Breast epithelium (tissue), 4 donors: ENCODE measurements at regions of chr9 and their contacts with region 1.

Region 1: DNA sequence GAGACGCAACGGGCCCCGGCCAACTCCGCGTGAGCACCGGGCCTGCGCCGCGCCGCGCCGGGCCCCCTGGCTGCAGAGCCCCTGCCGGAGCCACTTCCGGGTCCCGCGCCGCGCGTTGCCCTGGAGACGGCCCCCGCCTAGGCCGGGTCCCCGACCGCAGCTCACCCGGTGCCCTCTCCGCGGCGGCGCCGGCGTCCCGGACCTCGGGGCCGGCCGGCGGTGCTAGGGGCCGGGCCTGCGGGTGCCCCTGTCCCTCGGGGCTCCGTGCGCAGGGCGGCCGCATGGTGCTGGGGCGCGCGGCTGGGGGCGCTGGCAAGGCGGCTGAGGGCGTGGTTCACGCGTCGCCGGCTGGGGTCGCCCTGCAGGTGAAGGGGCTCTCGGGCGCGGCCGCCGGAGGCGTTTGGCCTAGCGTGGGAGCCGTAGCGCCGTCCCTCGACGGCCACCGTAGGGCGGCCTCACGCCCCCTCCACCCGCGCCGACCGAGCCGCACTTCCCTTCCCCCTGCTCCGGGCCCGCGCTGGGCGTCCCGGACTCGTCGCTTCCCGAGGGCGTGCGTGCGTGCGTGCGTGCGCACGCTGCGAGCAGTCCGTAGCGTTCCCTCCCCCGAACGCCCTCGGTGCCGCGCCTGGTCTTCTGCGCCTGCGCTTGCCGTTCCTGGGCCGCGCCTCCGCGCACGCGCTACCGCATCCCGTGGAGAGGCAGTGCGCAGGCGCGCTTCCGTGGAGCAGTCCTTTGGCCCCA is at the start of gene TMEM250:
- DNase-seq: peak; percentile 89 to 94
- H3K4me3 ChIP-seq: peak within 1 kb of the TSS; percentile 59 to 86 (median 76)
- H3K27ac ChIP-seq: peak within 1 kb of the TSS; percentile 88 to 97
- H3K4me1 ChIP-seq: peaks cover 9 to 13% of the 10 kb centered on the region in 2 donors
- H3K27me3 ChIP-seq: peaks cover 0 to 4% of the 10 kb centered on the region in 2 donors
- CTCF ChIP-seq: peak in 1 of 3 donors; percentile 6
- POLR2A ChIP-seq: peak; percentile 59
- total RNA-seq, gene TMEM250: 24.9 to 29.5 (median 26.1) TPM

Region 2: GRCh38 chr9:135971892-135972291 is 146.6 kb before region 1 on chr9:
- intact Hi-C with region 1: loop called (anchors 5 kb)
- DNase-seq: peak; percentile 56 to 79
- H3K4me3 ChIP-seq: no peak overlapping the region
- H3K27ac ChIP-seq: no peak overlapping the region
- H3K4me1 ChIP-seq: no peaks in the 10 kb centered on the region
- H3K27me3 ChIP-seq: peaks cover 0 to 23% of the 10 kb centered on the region in 2 donors
- CTCF ChIP-seq: no peak
- POLR2A ChIP-seq: no peak

Region 3: DNA sequence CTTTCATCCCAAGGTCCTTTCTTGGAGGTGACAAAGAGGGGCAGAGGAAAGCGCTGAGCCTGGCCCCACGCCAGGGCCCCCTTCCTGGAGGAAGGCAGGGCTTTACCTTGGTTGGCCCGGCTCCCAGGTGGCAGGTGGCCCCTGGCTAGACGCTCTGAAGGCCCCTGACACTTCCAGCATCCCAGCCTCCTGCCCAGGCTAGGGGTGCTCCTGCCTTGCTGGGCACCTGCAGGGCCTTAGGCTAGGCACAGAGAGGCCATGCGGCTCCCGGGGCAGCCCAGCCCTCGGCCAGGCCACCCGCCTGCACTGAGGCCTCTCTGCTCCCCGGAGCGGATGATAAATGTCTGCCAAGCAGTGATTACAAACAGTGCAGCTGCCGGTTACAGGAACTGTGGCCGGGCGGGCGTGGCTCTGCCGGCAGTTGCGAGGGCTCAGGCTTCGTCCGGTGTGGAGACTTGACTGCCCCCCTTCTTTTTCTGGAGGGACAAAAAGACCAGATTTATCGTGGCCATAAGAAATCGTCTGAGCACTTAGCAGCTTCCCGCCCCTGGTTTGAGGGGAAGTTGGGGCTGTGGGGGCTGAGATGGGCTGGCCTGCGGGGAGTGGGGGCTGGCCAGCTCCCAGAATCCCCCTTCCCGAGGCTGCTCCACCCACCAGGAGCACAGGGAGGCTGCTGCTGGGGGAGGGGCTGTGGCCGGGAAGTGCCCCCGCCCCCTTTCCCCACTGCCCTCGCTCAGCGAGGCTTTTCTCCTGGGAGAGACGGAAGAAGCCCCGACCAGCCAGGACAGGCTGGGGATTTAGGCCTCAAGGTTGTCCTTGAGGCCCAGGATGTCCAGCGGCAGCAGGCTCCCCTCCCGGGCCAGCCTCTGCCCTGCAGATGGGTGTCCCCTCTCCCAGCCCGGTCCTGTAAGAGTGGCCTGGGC is 125.7 kb before region 1 on chr9:
- intact Hi-C with region 1: loop called (anchors 10 kb)
- DNase-seq: peak; percentile 34 to 73
- H3K4me3 ChIP-seq: peak overlapping the region; percentile 7 to 63 (median 39)
- H3K27ac ChIP-seq: peak overlapping the region; percentile 78 to 93
- H3K4me1 ChIP-seq: peaks cover 6 to 22% of the 10 kb centered on the region in 2 donors
- H3K27me3 ChIP-seq: peaks cover 0 to 16% of the 10 kb centered on the region in 2 donors
- CTCF ChIP-seq: no peak
- POLR2A ChIP-seq: no peak

Region 4: DNA sequence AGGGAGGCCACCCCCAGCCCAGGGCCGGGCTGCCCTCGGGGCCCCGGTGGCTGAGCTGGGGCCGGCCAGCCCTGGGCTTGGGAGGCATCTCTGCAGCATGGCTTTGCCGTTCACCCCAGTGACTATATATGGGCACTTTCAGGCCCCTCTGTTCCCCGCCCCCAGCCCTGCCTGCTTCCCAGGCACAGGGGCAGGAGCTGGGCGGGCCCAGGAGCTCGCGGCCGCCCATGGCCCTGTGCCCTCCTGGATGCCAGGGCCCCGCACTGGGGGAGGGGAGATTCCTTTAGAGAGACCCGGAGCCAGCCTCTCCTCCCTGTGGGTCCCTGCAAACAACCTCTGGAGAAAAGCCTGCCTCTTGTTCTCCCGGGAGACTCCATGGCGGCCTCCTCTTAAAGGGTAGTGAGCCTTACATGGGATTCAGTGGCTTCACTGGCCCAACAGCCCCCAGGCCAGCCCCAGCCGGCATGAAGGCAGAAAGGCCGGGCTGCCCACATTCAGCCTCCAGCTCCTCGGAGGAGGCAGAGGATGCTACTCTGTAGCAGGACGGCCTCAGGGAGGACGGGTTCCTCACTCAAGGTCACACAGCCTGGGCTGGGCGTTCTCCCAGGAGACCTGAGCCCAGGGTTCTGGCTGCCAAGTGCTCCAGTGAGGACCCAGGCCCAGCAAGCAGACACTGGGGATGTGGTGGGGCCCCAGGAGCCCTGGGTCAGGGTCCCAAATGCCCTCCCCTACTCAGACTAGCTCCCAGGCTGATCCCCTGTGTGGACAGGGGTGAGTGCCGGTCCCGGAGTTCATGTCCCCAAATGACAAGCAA is 27.5 kb before region 1 on chr9:
- intact Hi-C with region 1: loop called (anchors 1 kb)
- DNase-seq: peak in 1 of 2 donors; percentile 48
- H3K4me3 ChIP-seq: peak overlapping the region in 1 of 3 donors; percentile 23
- H3K27ac ChIP-seq: peak overlapping the region; percentile 61 to 85
- H3K4me1 ChIP-seq: peaks cover 4 to 33% of the 10 kb centered on the region in 2 donors
- H3K27me3 ChIP-seq: no peaks in the 10 kb centered on the region
- CTCF ChIP-seq: no peak
- POLR2A ChIP-seq: no peak

Region 5: GRCh38 chr9:137705443-137706293 is 1587.2 kb after region 1 on chr9:
- intact Hi-C with region 1: no loop called
- DNase-seq: no peak
- H3K4me3 ChIP-seq: no peak overlapping the region
- H3K27ac ChIP-seq: no peak overlapping the region
- H3K4me1 ChIP-seq: peaks cover 0 to 5% of the 10 kb centered on the region in 2 donors
- H3K27me3 ChIP-seq: no peaks in the 10 kb centered on the region
- CTCF ChIP-seq: no peak
- POLR2A ChIP-seq: no peak